Spleen (tissue), 13 donors: ENCODE measurements at regions of chr3 and their contacts with region 1.

Region 1: DNA sequence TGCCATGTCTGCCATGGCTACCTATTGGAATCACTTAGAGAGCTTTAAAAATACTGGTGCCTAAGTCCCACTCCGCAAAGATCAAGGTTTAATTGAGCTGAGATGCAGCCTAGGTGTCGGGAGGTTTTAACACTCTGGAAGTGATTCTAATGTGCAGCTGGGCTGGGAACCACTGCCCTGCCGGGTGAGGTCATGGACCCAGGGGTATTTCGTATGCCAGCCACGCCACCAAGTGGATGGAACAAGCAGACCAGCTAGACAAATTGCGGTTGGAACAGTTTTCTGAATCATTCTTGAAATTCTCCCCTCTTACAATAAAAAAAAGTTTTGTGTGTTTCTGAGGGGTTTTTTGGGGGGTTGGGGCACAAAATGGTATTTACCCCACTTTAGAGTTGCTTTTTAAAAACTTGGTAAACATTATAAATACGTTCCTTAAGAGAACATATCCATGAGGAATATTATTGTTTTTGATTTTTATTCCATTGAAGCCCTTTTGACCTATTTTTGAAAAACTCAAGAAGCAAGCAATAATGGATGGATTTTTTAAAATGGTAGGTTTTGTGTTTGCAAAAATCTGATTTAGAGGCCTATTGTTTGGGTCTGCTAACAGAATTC is 66.2 kb upstream of the CSTA start:
- DNase-seq: peak; percentile 87
- H3K4me3 ChIP-seq: no peak overlapping the region
- H3K27ac ChIP-seq: no peak overlapping the region
- H3K4me1 ChIP-seq: peaks cover 0 to 41% (median 13%) of the 10 kb centered on the region in 6 donors
- H3K27me3 ChIP-seq: peaks cover 0 to 4% (median 0%) of the 10 kb centered on the region in 7 donors
- CTCF ChIP-seq: peak; percentile 38 to 73 (median 66)
- POLR2A ChIP-seq: no peak

Region 2: DNA sequence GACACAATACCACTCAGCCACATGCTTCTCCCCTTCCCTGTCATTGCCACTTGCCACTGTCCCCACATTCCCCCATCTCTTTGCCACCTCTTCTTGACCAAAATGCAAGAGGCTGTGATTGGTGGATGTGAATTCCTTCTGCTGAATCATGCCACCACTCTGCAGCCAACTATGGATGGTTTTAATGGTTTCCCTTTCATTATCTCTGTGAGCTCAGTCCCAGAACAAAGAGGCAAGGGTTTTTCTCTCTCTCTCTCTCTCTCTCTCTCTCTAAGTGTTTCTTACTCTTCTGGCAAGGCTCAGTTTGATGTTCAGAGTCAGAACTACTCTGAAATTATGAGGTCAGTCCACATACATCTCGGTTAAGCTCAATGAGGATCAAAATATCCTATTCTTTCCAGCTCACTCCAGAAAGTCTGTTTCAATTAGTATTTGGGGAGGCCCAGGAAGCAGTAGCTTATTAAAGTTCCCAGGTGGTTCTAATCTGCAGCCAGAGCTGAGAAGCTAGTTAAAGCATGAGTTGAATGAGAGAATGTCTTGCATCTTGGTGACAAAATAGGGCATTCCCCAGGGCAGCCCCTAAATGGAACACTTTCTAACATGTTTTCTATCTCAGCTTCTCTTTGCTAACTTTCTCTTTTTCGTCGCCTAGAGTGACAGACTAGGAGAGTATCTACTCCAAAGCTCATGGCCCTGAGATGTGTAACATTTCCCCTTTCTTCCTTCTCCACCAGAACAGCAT is 228.3 kb before region 1 on chr3:
- intact Hi-C with region 1: no loop called
- DNase-seq: no peak
- H3K4me3 ChIP-seq: no peak overlapping the region
- H3K27ac ChIP-seq: peak overlapping the region in 1 of 8 donors; percentile 9
- H3K4me1 ChIP-seq: peaks cover 0 to 4% (median 0%) of the 10 kb centered on the region in 6 donors
- H3K27me3 ChIP-seq: no peaks in the 10 kb centered on the region
- CTCF ChIP-seq: no peak
- POLR2A ChIP-seq: no peak

Region 3: GRCh38 chr3:122105626-122106025 is 153.2 kb before region 1 on chr3:
- intact Hi-C with region 1: loop called (anchors 5 kb)
- DNase-seq: no peak
- H3K4me3 ChIP-seq: no peak overlapping the region
- H3K27ac ChIP-seq: peak overlapping the region in 1 of 8 donors; percentile 10
- H3K4me1 ChIP-seq: peaks cover 0 to 22% (median 16%) of the 10 kb centered on the region in 6 donors
- H3K27me3 ChIP-seq: no peaks in the 10 kb centered on the region
- CTCF ChIP-seq: no peak
- POLR2A ChIP-seq: no peak